CD4-positive, alpha-beta memory T cell (primary cell): ENCODE measurements at regions of chr4 and their contacts with region 1.

Region 1: DNA sequence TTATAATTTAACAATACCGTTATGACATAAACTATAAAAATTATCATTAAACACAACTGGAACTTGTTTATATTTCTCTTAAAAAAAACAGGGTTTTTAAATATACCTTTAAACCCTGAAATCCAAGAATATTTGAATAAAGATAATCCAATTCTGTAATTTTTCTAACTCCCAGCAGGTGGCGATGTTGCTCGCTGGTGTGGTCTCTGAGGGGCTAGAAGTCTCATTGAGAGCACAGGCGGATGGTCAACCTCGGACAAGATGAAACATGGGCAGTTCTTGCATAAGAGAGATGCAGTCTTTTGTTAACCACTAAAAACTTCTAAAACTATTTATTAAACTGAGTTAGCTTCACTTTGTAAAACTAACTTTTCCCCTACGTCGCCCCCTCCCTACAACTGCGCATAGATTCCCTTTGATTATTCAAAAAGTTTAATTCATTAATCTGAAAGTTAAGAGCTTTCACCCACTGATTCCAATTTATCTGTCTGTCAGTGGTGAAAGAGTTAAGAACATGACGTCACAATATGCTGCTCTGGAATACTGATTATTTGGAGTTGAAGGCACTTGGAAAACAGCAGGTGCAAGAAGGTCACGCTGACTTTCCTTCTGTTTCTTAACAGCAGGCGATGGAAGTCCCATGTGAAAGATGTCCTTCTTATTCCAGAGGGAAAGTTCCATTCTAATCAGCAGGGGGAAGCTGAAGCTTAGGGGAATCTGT is 29.5 kb downstream of the DMP1 start:
- DNase-seq: peak in 4 of 5 donors; percentile 0 to 18 (median 3)
- H3K4me3 ChIP-seq: no peak overlapping the region
- H3K4me3 Mint-ChIP-seq: no peak overlapping the region
- H3K27ac ChIP-seq: no peak overlapping the region
- H3K27ac Mint-ChIP-seq: no peak overlapping the region
- H3K4me1 ChIP-seq: no peaks in the 10 kb centered on the region
- H3K4me1 Mint-ChIP-seq: no peaks in the 10 kb centered on the region
- H3K27me3 ChIP-seq: no peaks in the 10 kb centered on the region
- H3K27me3 Mint-ChIP-seq: peaks cover 0 to 3% of the 10 kb centered on the region in 2 donors

Region 2: GRCh38 chr4:87651941-87652340 is 27.7 kb before region 1 on chr4:
- CTCF ChIA-PET with region 1: no interaction called
- POLR2A ChIA-PET with region 1: no interaction called
- intact Hi-C with region 1: no loop called
- DNase-seq: no peak
- H3K4me3 ChIP-seq: no peak overlapping the region
- H3K4me3 Mint-ChIP-seq: no peak overlapping the region
- H3K27ac ChIP-seq: no peak overlapping the region
- H3K27ac Mint-ChIP-seq: no peak overlapping the region
- H3K4me1 ChIP-seq: no peaks in the 10 kb centered on the region
- H3K4me1 Mint-ChIP-seq: no peaks in the 10 kb centered on the region
- H3K27me3 ChIP-seq: no peaks in the 10 kb centered on the region
- H3K27me3 Mint-ChIP-seq: peaks cover 1 to 4% of the 10 kb centered on the region in 2 donors

Region 3: DNA sequence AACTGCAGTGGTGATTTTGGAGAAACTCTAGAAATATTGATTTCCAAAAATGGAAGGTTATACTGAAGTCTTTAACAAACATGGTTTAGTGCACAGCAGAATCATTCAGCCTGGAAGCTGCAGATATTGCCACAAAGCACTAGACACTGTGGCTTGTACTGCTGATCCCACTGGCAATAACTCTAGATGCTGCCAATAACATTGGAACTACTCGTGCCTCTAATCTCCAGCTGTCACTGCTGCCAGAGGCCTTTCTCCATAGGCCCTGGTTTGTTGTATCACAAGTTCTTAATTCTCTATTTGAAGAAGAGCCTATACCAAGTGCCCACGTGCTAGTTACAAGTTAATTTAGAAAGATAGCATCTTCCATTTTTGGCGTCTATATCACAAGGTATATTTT is 10.2 kb before region 1 on chr4:
- CTCF ChIA-PET with region 1: interaction called, 11 read pairs
- POLR2A ChIA-PET with region 1: no interaction called
- intact Hi-C with region 1: no loop called
- DNase-seq: no peak
- H3K4me3 ChIP-seq: no peak overlapping the region
- H3K4me3 Mint-ChIP-seq: no peak overlapping the region
- H3K27ac ChIP-seq: no peak overlapping the region
- H3K27ac Mint-ChIP-seq: no peak overlapping the region
- H3K4me1 ChIP-seq: no peaks in the 10 kb centered on the region
- H3K4me1 Mint-ChIP-seq: no peaks in the 10 kb centered on the region
- H3K27me3 ChIP-seq: no peaks in the 10 kb centered on the region
- H3K27me3 Mint-ChIP-seq: peaks cover 0 to 11% of the 10 kb centered on the region in 2 donors

Region 4: DNA sequence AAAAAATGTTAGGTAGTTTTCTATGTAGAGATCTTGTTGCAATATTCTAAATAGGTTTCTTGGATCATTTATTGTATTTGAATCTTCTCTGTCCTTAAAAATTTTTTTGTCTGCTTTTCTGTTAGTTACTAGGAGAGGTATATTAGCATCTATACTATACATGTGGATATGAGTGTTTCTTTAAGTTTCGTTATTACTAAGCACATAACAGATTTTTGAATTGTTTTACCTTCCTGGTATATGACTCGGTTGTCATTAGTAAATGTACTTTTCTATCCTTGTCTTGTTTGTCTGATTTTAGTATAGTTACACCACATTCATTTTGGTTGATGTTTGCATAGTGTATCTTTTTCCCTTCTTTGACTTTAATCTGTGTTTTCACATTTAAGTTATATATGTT is 823.7 kb after region 1 on chr4:
- CTCF ChIA-PET with region 1: no interaction called
- POLR2A ChIA-PET with region 1: no interaction called
- intact Hi-C with region 1: loop called (anchors 10 kb)
- DNase-seq: no peak
- H3K4me3 ChIP-seq: no peak overlapping the region
- H3K4me3 Mint-ChIP-seq: no peak overlapping the region
- H3K27ac ChIP-seq: no peak overlapping the region
- H3K27ac Mint-ChIP-seq: no peak overlapping the region
- H3K4me1 ChIP-seq: no peaks in the 10 kb centered on the region
- H3K4me1 Mint-ChIP-seq: no peaks in the 10 kb centered on the region
- H3K27me3 ChIP-seq: no peaks in the 10 kb centered on the region
- H3K27me3 Mint-ChIP-seq: no peaks in the 10 kb centered on the region